ENCODE measurements at regions of chr15 and their contacts with region 1.

Region 1: DNA sequence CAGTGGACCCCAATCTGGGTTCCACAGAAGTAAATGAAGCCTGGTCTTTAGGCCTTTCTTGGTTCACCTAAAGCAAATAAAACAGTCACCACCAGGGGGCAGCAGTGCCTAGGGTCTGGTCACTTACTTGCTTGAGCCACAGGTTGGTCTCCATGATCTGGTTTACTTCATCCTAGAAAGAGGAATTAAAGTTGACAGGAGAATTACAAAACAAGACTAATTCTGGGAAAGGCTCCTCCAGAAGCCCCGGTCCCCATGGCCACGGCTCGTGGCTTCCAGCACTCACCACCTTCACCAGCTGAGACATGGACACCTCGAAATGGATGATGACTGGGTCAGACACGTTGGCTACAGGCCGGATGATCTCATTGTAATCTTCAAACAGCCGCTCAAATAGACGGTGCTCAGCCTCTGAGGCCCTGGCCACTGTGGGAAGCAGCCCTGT is 2.3 kb downstream of the CHRNA3 start:
- DNase-seq: peak; percentile 71 to 80
- ATAC-seq: peak; percentile 75 to 91
- H3K4me3 ChIP-seq: no peak overlapping the region
- H3K27ac ChIP-seq: no peak overlapping the region
- H3K4me1 ChIP-seq: peaks cover 0 to 7% of the 10 kb centered on the region in 2 donors
- H3K27me3 ChIP-seq: peaks cover 32 to 38% (median 38%) of the 10 kb centered on the region in 3 donors
- CTCF ChIP-seq: peak; percentile 58 to 91 (median 85)
- POLR2A ChIP-seq: no peak

Region 2: GRCh38 chr15:78524230-78524629 is 94.3 kb before region 1 on chr15:
- in situ Hi-C with region 1: no loop called
- intact Hi-C with region 1: no loop called
- DNase-seq: no peak
- ATAC-seq: no peak
- H3K4me3 ChIP-seq: no peak overlapping the region
- H3K27ac ChIP-seq: no peak overlapping the region
- H3K4me1 ChIP-seq: no peaks in the 10 kb centered on the region
- H3K27me3 ChIP-seq: no peaks in the 10 kb centered on the region
- CTCF ChIP-seq: no peak
- POLR2A ChIP-seq: no peak

Region 3: DNA sequence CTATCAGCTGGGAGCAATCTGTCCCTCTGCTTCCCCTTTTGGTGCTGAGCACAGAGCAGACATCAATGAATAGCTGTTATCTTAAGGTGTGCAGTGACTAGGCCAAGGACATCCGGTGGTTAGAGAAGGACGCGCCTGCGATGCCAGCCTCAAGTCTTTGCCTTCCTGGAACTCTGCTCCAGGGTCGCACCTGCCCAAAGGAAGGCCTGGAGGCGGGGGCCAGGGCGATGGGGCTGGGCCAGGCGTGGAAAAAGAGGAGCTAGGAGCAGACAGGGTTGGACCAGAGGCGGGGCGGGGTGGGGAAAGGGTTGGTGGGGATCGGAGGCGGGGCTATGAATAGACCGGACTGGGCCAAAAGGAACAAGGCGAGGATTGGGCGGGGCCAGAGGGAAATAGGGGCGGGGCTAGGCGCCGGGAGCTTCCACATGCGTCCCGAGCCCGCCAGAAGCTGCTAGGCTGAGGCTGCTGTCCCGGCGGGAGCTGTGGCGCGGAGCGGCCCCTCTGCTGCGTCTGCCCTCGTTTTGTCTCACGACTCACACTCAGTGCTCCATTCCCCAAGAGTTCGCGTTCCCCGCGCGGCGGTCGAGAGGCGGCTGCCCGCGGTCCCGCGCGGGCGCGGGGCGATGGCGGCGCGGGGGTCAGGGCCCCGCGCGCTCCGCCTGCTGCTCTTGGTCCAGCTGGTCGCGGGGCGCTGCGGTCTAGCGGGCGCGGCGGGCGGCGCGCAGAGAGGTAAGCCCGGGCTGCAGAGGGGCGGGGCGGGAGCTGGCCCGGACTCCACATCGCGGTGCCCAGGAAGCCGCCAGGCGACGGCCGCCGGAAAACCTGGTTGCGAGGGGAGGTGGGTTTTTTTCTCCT is 53.2 kb before region 1 on chr15 and contains the start of gene CHRNA5:
- in situ Hi-C with region 1: no loop called
- intact Hi-C with region 1: no loop called
- DNase-seq: peak; percentile 66 to 74
- ATAC-seq: peak; percentile 86 to 95
- H3K4me3 ChIP-seq: peak within 1 kb of the TSS; percentile 51 to 70 (median 56)
- H3K27ac ChIP-seq: no peak within 1 kb of the TSS
- H3K4me1 ChIP-seq: peaks cover 8 to 13% of the 10 kb centered on the region in 2 donors
- H3K27me3 ChIP-seq: peaks cover 7 to 28% (median 11%) of the 10 kb centered on the region in 3 donors
- CTCF ChIP-seq: no peak
- POLR2A ChIP-seq: peak in 1 of 2 donors; percentile 28
- total RNA-seq, gene CHRNA5: 0.07 to 1.6 (median 0.71) TPM

Region 4: DNA sequence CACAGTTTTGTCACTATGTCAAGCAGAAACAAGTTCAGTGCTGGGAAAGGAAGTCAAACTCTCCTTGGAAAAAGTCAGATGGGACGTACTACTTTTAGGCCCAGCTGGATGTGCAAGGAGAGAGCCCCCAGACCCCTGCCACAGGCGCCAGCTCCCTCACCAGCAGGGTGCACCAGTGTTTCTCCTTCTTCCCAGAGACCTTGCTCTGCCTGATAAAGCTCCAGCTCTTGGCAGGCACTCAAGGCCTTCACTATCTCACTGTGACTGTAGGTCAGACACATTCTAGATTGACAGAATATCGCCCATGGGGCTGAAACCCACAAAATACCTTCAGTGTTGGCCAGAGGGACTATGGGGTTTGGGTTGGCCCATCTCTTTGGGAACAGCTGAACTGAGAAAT is 77.3 kb after region 1 on chr15:
- in situ Hi-C with region 1: loop called in 1 of 4 experiments (anchors 10 kb)
- intact Hi-C with region 1: no loop called
- DNase-seq: no peak
- ATAC-seq: no peak
- H3K4me3 ChIP-seq: no peak overlapping the region
- H3K27ac ChIP-seq: no peak overlapping the region
- H3K4me1 ChIP-seq: no peaks in the 10 kb centered on the region
- H3K27me3 ChIP-seq: no peaks in the 10 kb centered on the region
- CTCF ChIP-seq: no peak
- POLR2A ChIP-seq: no peak

Region 5: DNA sequence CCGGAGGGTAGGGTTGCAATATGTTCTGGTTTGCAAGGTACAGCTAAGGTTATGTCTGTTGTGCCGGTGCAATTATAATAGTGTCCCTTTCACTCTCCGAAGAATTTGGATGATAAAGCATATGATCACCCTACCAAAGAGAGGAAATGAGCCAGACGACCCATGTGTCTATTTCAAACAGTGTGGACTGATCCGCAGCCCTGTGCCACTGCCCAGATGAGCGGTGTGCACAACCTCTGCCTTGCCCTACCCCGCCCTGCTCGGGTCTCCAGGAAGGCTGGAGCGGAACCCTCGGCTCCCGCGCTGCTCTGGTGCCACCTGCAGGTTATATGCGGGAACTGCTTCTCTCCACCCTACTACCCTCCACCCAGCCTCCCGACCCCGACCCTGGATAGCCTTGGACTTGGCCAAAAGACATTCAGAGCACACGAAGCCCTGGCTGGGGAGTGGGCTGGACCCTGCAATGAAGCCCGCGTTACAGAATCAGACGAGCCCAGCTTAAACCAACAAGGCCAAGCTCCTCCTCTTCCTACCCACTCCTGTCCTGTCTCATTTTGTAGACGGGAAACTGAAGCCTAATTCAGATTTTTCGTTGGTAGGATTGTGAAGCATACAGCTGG is 90.9 kb after region 1 on chr15:
- in situ Hi-C with region 1: loop called in 2 of 4 experiments (anchors 5 kb)
- intact Hi-C with region 1: loop called (anchors 1 kb)
- DNase-seq: peak; percentile 34 to 47
- ATAC-seq: peak; percentile 70 to 89
- H3K4me3 ChIP-seq: no peak overlapping the region
- H3K27ac ChIP-seq: no peak overlapping the region
- H3K4me1 ChIP-seq: no peaks in the 10 kb centered on the region
- H3K27me3 ChIP-seq: no peaks in the 10 kb centered on the region
- CTCF ChIP-seq: peak; percentile 75 to 95 (median 85)
- POLR2A ChIP-seq: no peak

Region 6: DNA sequence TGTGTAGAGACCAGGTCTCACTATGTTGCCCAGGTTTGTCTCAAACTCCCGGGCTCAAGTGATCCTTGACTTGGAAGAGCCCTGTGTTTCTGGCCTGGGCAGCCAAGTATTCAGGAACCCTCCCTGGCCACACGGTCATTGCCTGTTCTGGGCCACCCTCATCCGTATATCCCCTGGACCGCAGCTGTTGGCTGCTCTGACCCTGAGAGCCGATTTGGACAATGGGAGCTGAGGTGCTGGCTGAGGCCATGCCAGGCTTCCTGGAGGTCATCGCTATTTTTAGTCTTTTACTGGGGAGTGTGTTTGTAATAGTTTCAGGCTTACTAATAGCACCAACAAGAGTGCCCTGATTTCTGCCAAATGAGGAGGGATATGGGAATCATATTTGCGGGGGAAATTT is 132.1 kb after region 1 on chr15:
- in situ Hi-C with region 1: loop called in 2 of 4 experiments (anchors 5 to 10 kb)
- intact Hi-C with region 1: loop called (anchors 1 kb)
- DNase-seq: peak in 1 of 2 donors; percentile 73
- ATAC-seq: peak; percentile 88 to 89
- H3K4me3 ChIP-seq: peak overlapping the region; percentile 39 to 50 (median 42)
- H3K27ac ChIP-seq: peak overlapping the region; percentile 81 to 89 (median 86)
- H3K4me1 ChIP-seq: peaks cover 15 to 20% of the 10 kb centered on the region in 2 donors
- H3K27me3 ChIP-seq: no peaks in the 10 kb centered on the region
- CTCF ChIP-seq: no peak
- POLR2A ChIP-seq: peak in 1 of 2 donors; percentile 8